BJ (cell line): ENCODE measurements at regions of chr5 and their contacts with region 1.

Region 1: GRCh38 chr5:111530298-111530740 is 18.0 kb upstream of the STARD4 start:
- DNase-seq: no peak
- H3K4me3 ChIP-seq: no peak overlapping the region
- H3K27me3 ChIP-seq: no peaks in the 10 kb centered on the region
- CTCF ChIP-seq: no peak

Region 2: DNA sequence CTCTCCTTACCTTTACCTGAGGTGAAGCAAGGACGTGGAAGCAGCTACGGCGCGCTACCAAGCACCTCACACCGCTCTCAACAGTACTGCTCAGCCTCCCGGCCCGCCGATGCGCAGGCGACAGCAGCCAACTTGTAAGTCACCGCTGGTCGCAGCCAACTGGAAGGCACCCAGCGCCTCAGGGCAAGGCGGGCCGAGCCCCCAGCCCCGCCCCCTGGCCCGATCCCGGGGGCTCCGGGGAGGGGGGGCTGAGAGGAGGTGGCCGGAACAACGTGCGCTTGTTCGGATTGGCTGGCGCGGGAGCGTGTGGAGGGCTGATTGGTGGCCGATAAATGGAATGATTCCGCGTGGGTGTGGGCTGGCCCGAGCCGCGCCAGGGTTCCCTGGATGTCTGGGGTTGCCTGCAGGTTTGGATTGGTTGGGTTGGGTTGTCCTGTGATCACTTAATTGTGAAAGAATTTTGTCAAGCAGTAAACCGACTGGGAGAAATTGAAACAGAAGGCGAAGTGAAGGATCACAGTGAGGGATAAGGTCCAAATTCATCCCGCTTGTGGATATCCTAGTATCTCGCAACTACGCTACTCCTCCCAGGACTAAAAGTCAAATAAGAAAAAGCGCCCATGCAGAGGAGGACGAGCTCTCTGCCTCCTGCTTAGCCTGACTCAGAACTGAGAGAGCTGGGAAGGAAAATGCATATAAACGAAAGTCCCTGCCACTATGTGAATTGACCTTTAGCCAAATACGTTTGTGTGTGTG is 17.8 kb before region 1 on chr5 and contains the start of gene STARD4:
- CTCF ChIA-PET with region 1: interaction called, 31 read pairs
- POLR2A ChIA-PET with region 1: no interaction called
- DNase-seq: peak; percentile 83
- H3K4me3 ChIP-seq: peak within 1 kb of the TSS; percentile 88
- H3K27me3 ChIP-seq: no peaks in the 10 kb centered on the region
- CTCF ChIP-seq: no peak
- polyA plus RNA-seq, gene STARD4: 8.5 and 14.6 TPM in 2 replicates

Region 3: GRCh38 chr5:111550279-111551020 is 20.1 kb after region 1 on chr5:
- CTCF ChIA-PET with region 1: interaction called, 16 read pairs
- POLR2A ChIA-PET with region 1: interaction called, 35 read pairs
- DNase-seq: peak; percentile 92
- H3K4me3 ChIP-seq: no peak overlapping the region
- H3K27me3 ChIP-seq: no peaks in the 10 kb centered on the region
- CTCF ChIP-seq: peak; percentile 50

Region 4: DNA sequence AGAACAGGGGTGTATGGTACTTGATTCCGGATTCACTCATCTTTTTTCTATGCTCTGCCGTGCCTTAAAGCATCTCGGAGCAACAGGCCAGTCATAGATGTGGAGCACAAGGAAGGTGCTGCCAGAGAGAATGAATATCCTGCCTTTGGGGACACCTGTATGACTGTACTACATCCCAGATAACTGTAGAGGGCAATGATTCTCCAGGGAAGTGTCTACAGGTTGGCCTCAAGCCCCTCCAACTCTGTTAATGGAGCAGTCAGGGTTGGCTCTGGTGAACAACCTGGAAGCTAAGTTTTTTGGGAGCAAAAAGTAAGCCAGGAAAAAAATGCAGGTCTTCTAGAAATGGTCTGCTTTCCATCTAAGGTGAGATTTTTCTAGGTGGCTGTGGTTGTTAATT is 155.7 kb after region 1 on chr5:
- CTCF ChIA-PET with region 1: interaction called, 7 read pairs
- POLR2A ChIA-PET with region 1: interaction called, 12 read pairs
- DNase-seq: no peak
- H3K4me3 ChIP-seq: no peak overlapping the region
- H3K27me3 ChIP-seq: no peaks in the 10 kb centered on the region
- CTCF ChIP-seq: no peak

Region 5: GRCh38 chr5:111772456-111773122 is 242.3 kb after region 1 on chr5:
- CTCF ChIA-PET with region 1: no interaction called
- POLR2A ChIA-PET with region 1: interaction called, 20 read pairs
- DNase-seq: no peak
- H3K4me3 ChIP-seq: no peak overlapping the region
- H3K27me3 ChIP-seq: no peaks in the 10 kb centered on the region
- CTCF ChIP-seq: no peak